ENCODE measurements at regions of chr12 and their contacts with region 1.

Region 1: DNA sequence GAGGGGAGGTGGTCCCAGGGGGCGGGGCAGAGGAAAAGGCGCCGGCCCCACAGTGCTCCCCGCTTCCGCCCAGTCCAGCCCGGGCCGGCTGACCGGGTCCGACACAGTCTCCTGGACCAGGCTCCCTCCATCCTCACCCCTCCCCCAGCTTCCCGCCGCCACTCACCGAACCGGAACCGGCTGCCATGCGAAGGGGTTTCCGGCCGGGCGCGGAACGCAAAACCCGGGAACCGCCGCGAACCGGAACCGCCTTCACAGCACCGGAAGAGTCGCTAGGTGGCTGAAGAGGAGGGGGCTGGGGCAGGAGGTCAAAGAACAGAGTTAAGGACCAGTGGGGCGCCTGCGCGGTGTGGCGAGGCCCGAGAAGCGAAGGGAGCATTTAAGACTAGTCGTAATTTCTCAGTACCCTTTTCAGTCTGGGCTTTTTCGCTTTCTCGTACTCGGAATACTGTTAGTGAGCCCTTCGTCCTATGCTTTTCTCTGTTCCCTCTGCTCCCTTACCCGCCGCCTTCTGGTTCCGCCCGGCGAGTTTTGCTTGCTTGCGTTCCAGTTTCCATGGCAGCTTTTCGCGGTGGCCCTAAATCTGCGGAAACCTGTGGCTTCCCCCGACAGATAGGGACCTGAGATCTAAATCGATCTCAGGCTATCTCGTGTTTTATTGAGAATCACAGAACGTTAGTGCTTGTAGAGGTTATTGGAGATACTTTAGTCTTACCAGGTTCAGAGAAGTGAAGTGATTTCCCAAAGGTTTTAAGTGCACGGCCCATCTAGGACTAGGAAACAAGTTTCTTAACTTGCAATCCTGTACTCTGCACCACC is at the start of gene SENP1:
- H3K4me3 ChIP-seq: peak within 1 kb of the TSS; percentile 99
- H3K27ac ChIP-seq: peak within 1 kb of the TSS; percentile 77
- H3K4me1 ChIP-seq: no peaks in the 10 kb centered on the region
- CTCF ChIP-seq: peak; percentile 63

Region 2: DNA sequence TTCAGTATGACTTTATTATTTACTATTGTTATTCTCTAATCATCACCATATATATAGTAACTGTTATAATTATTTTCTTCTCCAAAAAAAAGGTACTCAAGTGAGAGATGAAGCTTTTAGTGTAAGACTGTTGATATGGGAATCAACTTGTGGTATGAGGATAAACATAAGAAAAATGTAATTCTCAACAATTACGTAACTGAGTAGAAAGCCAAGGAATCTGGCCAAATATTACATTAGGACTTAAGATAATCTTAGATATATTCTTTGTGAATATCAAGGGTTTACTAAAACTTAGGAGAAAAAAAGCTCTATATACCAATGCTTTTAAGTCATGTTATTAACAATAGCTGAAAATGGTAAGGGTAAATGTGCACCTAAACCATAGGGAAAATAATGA is 13.5 kb before region 1 on chr12:
- CTCF ChIA-PET with region 1: no interaction called
- POLR2A ChIA-PET with region 1: interaction called, 10 read pairs
- H3K4me3 ChIP-seq: no peak overlapping the region
- H3K27ac ChIP-seq: no peak overlapping the region
- H3K4me1 ChIP-seq: no peaks in the 10 kb centered on the region
- CTCF ChIP-seq: no peak

Region 3: GRCh38 chr12:48119078-48119833 is 13.2 kb after region 1 on chr12 and contains the start of gene PFKM:
- CTCF ChIA-PET with region 1: interaction called, 4 read pairs
- POLR2A ChIA-PET with region 1: interaction called, 24 read pairs
- H3K4me3 ChIP-seq: peak within 1 kb of the TSS; percentile 59
- H3K27ac ChIP-seq: peak within 1 kb of the TSS; percentile 32
- H3K4me1 ChIP-seq: peaks cover 14% of the 10 kb centered on the region
- CTCF ChIP-seq: no peak

Region 4: GRCh38 chr12:48157018-48157888 is 51.2 kb after region 1 on chr12 and contains the start of gene ASB8:
- CTCF ChIA-PET with region 1: interaction called, 3 read pairs
- POLR2A ChIA-PET with region 1: interaction called, 18 read pairs
- H3K4me3 ChIP-seq: peak within 1 kb of the TSS; percentile 86
- H3K27ac ChIP-seq: peak within 1 kb of the TSS; percentile 70
- H3K4me1 ChIP-seq: no peaks in the 10 kb centered on the region
- CTCF ChIP-seq: peak; percentile 45

Measured in HEK293 (cell line).